PC-9 (cell line): ENCODE measurements at regions of chr12 and their contacts with region 1.

Region 1: GRCh38 chr12:52203075-52203921 is 11.5 kb upstream of the KRT80 start:
- DNase-seq: peak; percentile 77 to 78
- H3K4me3 ChIP-seq: no peak overlapping the region
- H3K27ac ChIP-seq: peak overlapping the region; percentile 47; the same call in 1 of the 2 replicates
- H3K4me1 ChIP-seq: peaks cover 71% of the 10 kb centered on the region
- H3K27me3 ChIP-seq: no peaks in the 10 kb centered on the region
- CTCF ChIP-seq: no peak

Region 2: GRCh38 chr12:52186145-52186840 is 17.0 kb before region 1 on chr12:
- CTCF ChIA-PET with region 1: interaction called, 6 read pairs
- POLR2A ChIA-PET with region 1: interaction called, 26 read pairs
- intact Hi-C with region 1: loop called (anchors 1 kb)
- DNase-seq: peak; percentile 79 to 94
- H3K4me3 ChIP-seq: no peak overlapping the region; the same call in 1 of the 2 replicates
- H3K27ac ChIP-seq: peak overlapping the region; percentile 75
- H3K4me1 ChIP-seq: peaks cover 59% of the 10 kb centered on the region
- H3K27me3 ChIP-seq: no peaks in the 10 kb centered on the region
- CTCF ChIP-seq: no peak

Region 3: GRCh38 chr12:52192173-52192791 is 11.0 kb before region 1 on chr12:
- CTCF ChIA-PET with region 1: interaction called, 6 read pairs
- POLR2A ChIA-PET with region 1: interaction called, 26 read pairs
- intact Hi-C with region 1: no loop called
- DNase-seq: peak; percentile 90 to 98
- H3K4me3 ChIP-seq: peak overlapping the region; percentile 92
- H3K27ac ChIP-seq: peak overlapping the region; percentile 77
- H3K4me1 ChIP-seq: peaks cover 75% of the 10 kb centered on the region
- H3K27me3 ChIP-seq: no peaks in the 10 kb centered on the region
- CTCF ChIP-seq: no peak

Region 4: GRCh38 chr12:52221912-52222457 is 18.7 kb after region 1 on chr12:
- CTCF ChIA-PET with region 1: interaction called, 3 read pairs
- POLR2A ChIA-PET with region 1: interaction called, 11 read pairs
- intact Hi-C with region 1: no loop called
- DNase-seq: peak; percentile 68 to 74
- H3K4me3 ChIP-seq: no peak overlapping the region
- H3K27ac ChIP-seq: peak overlapping the region; percentile 68
- H3K4me1 ChIP-seq: peaks cover 95% of the 10 kb centered on the region
- H3K27me3 ChIP-seq: no peaks in the 10 kb centered on the region
- CTCF ChIP-seq: peak; percentile 58

Region 5: DNA sequence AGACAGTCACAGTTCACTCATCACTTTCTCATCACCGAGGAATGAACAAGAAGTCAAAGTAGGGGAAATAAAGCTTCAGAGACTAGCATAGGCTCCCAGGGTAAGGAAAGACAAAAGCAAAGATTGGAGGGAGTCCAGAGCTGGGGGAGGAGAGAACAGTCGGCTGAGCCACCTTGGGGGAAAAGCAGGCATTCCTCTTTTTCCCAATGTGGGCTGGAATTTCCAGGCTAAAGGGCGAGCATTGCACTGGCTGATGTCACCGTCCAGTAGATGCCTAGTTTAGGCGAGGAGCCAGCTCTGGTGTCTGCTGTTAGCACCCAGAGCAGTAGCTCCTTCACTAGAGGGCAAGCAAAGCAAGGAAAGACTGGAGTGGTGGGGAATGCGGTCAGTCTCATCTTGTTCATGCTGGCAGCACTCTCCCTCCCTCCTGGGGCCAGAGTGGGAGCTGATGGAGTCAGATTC is 239.3 kb after region 1 on chr12:
- CTCF ChIA-PET with region 1: no interaction called
- POLR2A ChIA-PET with region 1: interaction called, 10 read pairs
- intact Hi-C with region 1: no loop called
- DNase-seq: peak; percentile 82 to 92
- H3K4me3 ChIP-seq: peak overlapping the region; percentile 17; the same call in 1 of the 2 replicates
- H3K27ac ChIP-seq: peak overlapping the region; percentile 97
- H3K4me1 ChIP-seq: peaks cover 74% of the 10 kb centered on the region
- H3K27me3 ChIP-seq: no peaks in the 10 kb centered on the region
- CTCF ChIP-seq: no peak; the same call in 1 of the 2 replicates